Naive thymus-derived CD4-positive, alpha-beta T cell (primary cell): ENCODE measurements at regions of chr22 and their contacts with region 1.

Region 1: GRCh38 chr22:50341977-50342650 is 1.0 kb upstream of the PPP6R2 start:
- DNase-seq: peak; percentile 76 to 93 (median 86)
- ATAC-seq: peak; percentile 71
- H3K4me3 ChIP-seq: peak overlapping the region; percentile 86
- H3K4me3 Mint-ChIP-seq: peak overlapping the region; percentile 73 to 91 (median 88)
- H3K27ac ChIP-seq: peak overlapping the region; percentile 96
- H3K27ac Mint-ChIP-seq: peak overlapping the region in 7 of 9 donors; percentile 82 to 96 (median 93)
- H3K4me1 ChIP-seq: peaks cover 13 to 16% of the 10 kb centered on the region in 2 donors
- H3K4me1 Mint-ChIP-seq: peaks cover 0 to 18% (median 9%) of the 10 kb centered on the region in 7 donors
- H3K27me3 ChIP-seq: no peaks in the 10 kb centered on the region
- H3K27me3 Mint-ChIP-seq: no peaks in the 10 kb centered on the region

Region 2: GRCh38 chr22:50244420-50245213 is 97.5 kb before region 1 on chr22 and contains the start of gene TUBGCP6:
- CTCF ChIA-PET with region 1: interaction called, 6 read pairs
- POLR2A ChIA-PET with region 1: interaction called, 15 read pairs
- intact Hi-C with region 1: loop called (anchors 1 kb)
- DNase-seq: peak; percentile 88 to 95 (median 93)
- ATAC-seq: peak; percentile 88
- H3K4me3 ChIP-seq: peak within 1 kb of the TSS; percentile 73
- H3K4me3 Mint-ChIP-seq: peak within 1 kb of the TSS; percentile 76 to 100 (median 98)
- H3K27ac ChIP-seq: peak within 1 kb of the TSS; percentile 96
- H3K27ac Mint-ChIP-seq: peak within 1 kb of the TSS; percentile 91 to 100 (median 100)
- H3K4me1 ChIP-seq: peaks cover 39 to 51% of the 10 kb centered on the region in 2 donors
- H3K4me1 Mint-ChIP-seq: peaks cover 16 to 52% (median 40%) of the 10 kb centered on the region in 7 donors
- H3K27me3 ChIP-seq: no peaks in the 10 kb centered on the region
- H3K27me3 Mint-ChIP-seq: no peaks in the 10 kb centered on the region
- total RNA-seq, gene TUBGCP6: 67.8 to 146 (median 134) TPM

Region 3: DNA sequence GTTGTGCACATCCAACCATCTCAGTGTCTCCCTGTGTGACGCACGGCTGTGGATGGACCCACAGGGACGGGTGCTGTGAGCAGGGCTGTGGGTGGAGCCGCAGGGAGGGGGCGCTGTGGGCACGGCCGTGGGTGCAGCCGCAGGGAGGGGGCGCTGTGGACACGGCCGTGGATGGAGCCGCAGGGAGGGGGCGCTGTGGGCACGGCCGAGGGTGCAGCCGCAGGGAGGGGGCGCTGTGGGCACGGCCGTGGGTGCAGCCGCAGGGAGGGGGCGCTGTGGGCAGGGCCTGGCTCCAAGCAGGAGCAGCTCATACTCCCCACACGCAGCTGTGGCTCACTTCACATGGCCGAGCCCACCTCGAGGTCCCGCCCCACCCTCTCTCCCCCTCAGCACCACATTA is 66.0 kb before region 1 on chr22:
- CTCF ChIA-PET with region 1: no interaction called
- POLR2A ChIA-PET with region 1: no interaction called
- intact Hi-C with region 1: loop called (anchors 1 kb)
- DNase-seq: peak in 2 of 9 donors; percentile 22 to 27
- ATAC-seq: peak; percentile 86
- H3K4me3 ChIP-seq: no peak overlapping the region
- H3K4me3 Mint-ChIP-seq: no peak overlapping the region
- H3K27ac ChIP-seq: no peak overlapping the region
- H3K27ac Mint-ChIP-seq: no peak overlapping the region
- H3K4me1 ChIP-seq: peaks cover 3 to 4% of the 10 kb centered on the region in 2 donors
- H3K4me1 Mint-ChIP-seq: peaks cover 0 to 12% (median 5%) of the 10 kb centered on the region in 7 donors
- H3K27me3 ChIP-seq: no peaks in the 10 kb centered on the region
- H3K27me3 Mint-ChIP-seq: peaks cover 0 to 12% (median 0%) of the 10 kb centered on the region in 5 donors

Region 4: DNA sequence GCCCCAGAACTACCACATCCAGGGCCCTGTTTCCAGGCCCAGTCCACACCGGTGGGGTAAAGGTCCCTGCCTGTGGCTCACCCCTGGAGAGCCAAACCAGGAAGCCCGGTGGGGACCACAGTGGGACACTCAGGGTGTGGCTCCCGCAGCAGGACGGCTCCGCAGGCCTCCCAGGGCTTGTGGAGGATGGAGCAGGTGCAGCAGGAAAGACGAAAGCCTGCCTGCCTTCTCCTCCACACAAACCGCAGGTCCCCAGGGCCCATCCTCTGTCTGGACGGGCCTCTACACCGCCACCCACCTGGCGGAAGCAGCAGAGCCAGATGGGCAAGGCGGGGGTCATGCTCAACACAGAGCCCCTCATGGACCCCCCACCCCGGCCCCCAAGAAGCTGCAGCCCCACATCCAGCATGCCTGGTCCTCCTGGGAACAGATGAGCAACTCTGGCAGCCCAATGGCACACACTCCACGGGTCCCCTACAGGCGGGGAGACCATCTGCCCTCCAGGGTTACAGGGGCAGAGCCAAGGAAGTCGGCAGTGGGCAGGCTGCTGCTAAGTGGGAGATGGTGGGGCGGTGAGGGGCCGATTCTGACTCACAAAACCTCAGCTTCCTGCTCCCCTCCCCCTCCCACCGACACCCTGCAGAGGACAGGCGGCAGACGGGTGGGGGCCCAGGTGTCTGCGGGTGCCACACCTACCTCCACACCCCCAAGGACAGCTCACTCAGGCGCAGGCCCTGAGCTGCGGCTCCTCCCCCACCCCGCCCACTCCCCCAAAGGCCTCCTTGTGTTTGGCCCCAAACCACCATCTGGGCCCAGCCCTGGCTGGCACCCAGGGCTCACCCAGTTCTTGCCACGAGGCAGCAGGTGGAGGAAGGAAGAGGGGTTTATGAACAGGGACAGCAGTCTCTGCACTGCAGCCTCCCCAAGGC is 127.5 kb after region 1 on chr22:
- CTCF ChIA-PET with region 1: no interaction called
- POLR2A ChIA-PET with region 1: no interaction called
- intact Hi-C with region 1: loop called (anchors 1 to 5 kb)
- DNase-seq: peak; percentile 77 to 96 (median 92)
- ATAC-seq: peak; percentile 95
- H3K4me3 ChIP-seq: peak overlapping the region; percentile 65
- H3K4me3 Mint-ChIP-seq: peak overlapping the region; percentile 76 to 100 (median 90)
- H3K27ac ChIP-seq: peak overlapping the region; percentile 90
- H3K27ac Mint-ChIP-seq: peak overlapping the region; percentile 88 to 99 (median 93)
- H3K4me1 ChIP-seq: peaks cover 53 to 57% of the 10 kb centered on the region in 2 donors
- H3K4me1 Mint-ChIP-seq: peaks cover 45 to 69% (median 61%) of the 10 kb centered on the region in 7 donors
- H3K27me3 ChIP-seq: no peaks in the 10 kb centered on the region
- H3K27me3 Mint-ChIP-seq: no peaks in the 10 kb centered on the region

Region 5: GRCh38 chr22:50485201-50486131 is 143.4 kb after region 1 on chr22:
- CTCF ChIA-PET with region 1: no interaction called
- POLR2A ChIA-PET with region 1: no interaction called
- intact Hi-C with region 1: no loop called
- DNase-seq: no peak
- ATAC-seq: no peak
- H3K4me3 ChIP-seq: no peak overlapping the region
- H3K4me3 Mint-ChIP-seq: peak overlapping the region in 1 of 10 donors; percentile 59
- H3K27ac ChIP-seq: no peak overlapping the region
- H3K27ac Mint-ChIP-seq: peak overlapping the region in 3 of 9 donors; percentile 46 to 68 (median 54)
- H3K4me1 ChIP-seq: peaks cover 4 to 8% of the 10 kb centered on the region in 2 donors
- H3K4me1 Mint-ChIP-seq: peaks cover 0 to 11% (median 2%) of the 10 kb centered on the region in 7 donors
- H3K27me3 ChIP-seq: no peaks in the 10 kb centered on the region
- H3K27me3 Mint-ChIP-seq: peaks cover 0 to 3% (median 0%) of the 10 kb centered on the region in 5 donors

Region 6: GRCh38 chr22:50507991-50508884 is 166.1 kb after region 1 on chr22 and contains the start of gene NCAPH2:
- CTCF ChIA-PET with region 1: interaction called, 3 read pairs
- POLR2A ChIA-PET with region 1: interaction called, 4 read pairs
- intact Hi-C with region 1: loop called in 1 of 2 experiments (anchors 1 kb)
- DNase-seq: peak; percentile 95 to 99 (median 97)
- ATAC-seq: peak; percentile 86
- H3K4me3 ChIP-seq: peak within 1 kb of the TSS; percentile 91
- H3K4me3 Mint-ChIP-seq: peak within 1 kb of the TSS; percentile 88 to 97 (median 94)
- H3K27ac ChIP-seq: peak within 1 kb of the TSS; percentile 99
- H3K27ac Mint-ChIP-seq: peak within 1 kb of the TSS; percentile 89 to 99 (median 98)
- H3K4me1 ChIP-seq: peaks cover 19 to 26% of the 10 kb centered on the region in 2 donors
- H3K4me1 Mint-ChIP-seq: peaks cover 14 to 33% (median 27%) of the 10 kb centered on the region in 7 donors
- H3K27me3 ChIP-seq: no peaks in the 10 kb centered on the region
- H3K27me3 Mint-ChIP-seq: no peaks in the 10 kb centered on the region
- total RNA-seq, gene NCAPH2: 74.3 to 135 (median 91.1) TPM